Activated CD8-positive, alpha-beta T cell treated with anti-CD3 and anti-CD28 coated beads, Interleukin-2, amount 10 ng/mL, durations not matched to agents 7 days and 5 days (primary cell): ENCODE measurements at regions of chr6 and their contacts with region 1.

Region 1: DNA sequence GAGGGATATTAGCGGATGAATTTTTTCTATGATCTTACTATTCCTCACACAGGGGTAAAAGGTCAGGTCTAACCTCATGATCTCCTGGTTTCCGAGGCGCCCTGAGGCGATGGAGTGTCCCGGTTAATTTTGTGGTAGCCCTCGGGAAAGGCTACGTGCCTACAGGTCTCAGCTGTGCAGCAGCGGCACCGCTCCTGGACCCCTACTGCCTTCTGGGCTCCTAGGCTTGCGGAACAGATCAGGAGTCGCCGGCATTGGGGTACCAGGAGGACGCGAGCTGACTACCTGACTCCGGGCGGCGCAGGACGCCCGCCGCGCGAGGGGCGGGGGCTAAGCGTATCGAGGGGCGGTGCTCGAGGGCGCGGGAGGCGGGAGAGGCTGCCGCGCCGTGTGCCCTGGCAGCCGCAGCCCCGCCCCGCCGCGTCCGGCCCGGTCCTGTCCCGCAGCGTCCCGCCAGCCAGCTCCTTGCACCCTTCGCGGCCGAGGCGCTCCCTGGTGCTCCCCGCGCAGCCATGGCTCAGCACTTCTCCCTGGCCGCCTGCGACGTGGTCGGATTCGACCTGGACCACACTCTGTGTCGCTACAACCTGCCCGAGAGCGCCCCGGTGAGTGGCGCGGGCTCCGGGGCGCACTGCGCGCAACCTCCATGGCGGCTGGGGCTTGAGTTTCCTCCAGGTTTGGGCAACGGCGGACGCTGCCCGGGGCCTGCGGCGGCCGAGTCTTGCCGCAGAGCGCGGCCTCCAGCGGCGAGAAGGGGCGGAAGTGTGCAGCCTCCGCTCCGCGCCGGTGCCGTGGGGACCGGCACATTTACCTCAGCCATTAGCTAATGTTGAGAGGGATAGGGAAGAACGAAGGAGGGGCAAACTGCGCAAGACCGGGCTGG is at the start of gene NT5DC1:
- DNase-seq: peak; percentile 88
- ATAC-seq: peak; percentile 96
- H3K4me3 Mint-ChIP-seq: peak within 1 kb of the TSS; percentile 88
- H3K27ac Mint-ChIP-seq: peak within 1 kb of the TSS; percentile 87
- H3K4me1 Mint-ChIP-seq: peaks cover 29% of the 10 kb centered on the region
- H3K27me3 Mint-ChIP-seq: peaks cover 2% of the 10 kb centered on the region
- total RNA-seq, gene NT5DC1: 29.5 to 32.9 TPM

Region 2: DNA sequence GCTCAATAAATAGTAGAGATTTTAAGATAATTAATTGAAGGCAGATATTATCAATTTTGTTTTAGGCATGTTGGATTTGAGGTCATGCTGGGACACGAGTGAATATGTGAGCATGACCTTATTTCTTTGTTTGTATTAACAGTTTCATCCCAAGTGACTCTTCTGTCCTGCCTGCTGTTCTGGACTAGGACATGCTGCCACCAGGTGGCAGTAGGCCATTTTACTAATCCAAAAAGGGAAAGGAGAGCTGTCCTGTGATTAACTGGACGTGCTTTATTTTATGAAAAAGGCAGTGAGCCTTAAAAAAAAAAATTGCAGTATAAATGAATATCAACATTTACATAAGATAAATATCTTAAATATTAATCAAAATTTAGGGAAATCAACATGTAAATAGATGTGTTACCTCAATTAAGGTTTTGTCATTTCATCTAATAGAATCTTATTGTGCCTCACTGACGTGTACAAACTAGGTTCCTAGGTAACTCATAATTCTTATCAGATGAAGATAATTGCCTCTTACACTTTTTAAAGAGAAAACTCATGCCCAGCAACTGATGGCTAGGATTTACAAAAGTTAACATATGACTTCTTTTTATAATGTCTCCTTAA is 89.8 kb before region 1 on chr6:
- CTCF ChIA-PET with region 1: interaction called, 22 read pairs
- POLR2A ChIA-PET with region 1: interaction called, 3 read pairs
- DNase-seq: peak; percentile 61
- ATAC-seq: peak; percentile 72
- H3K4me3 Mint-ChIP-seq: no peak overlapping the region
- H3K27ac Mint-ChIP-seq: no peak overlapping the region
- H3K4me1 Mint-ChIP-seq: no peaks in the 10 kb centered on the region
- H3K27me3 Mint-ChIP-seq: peaks cover 18% of the 10 kb centered on the region

Region 3: GRCh38 chr6:116040980-116041379 is 59.7 kb before region 1 on chr6:
- CTCF ChIA-PET with region 1: no interaction called
- POLR2A ChIA-PET with region 1: no interaction called
- DNase-seq: no peak
- ATAC-seq: no peak
- H3K4me3 Mint-ChIP-seq: no peak overlapping the region
- H3K27ac Mint-ChIP-seq: no peak overlapping the region
- H3K4me1 Mint-ChIP-seq: no peaks in the 10 kb centered on the region
- H3K27me3 Mint-ChIP-seq: peaks cover 2% of the 10 kb centered on the region

Region 4: DNA sequence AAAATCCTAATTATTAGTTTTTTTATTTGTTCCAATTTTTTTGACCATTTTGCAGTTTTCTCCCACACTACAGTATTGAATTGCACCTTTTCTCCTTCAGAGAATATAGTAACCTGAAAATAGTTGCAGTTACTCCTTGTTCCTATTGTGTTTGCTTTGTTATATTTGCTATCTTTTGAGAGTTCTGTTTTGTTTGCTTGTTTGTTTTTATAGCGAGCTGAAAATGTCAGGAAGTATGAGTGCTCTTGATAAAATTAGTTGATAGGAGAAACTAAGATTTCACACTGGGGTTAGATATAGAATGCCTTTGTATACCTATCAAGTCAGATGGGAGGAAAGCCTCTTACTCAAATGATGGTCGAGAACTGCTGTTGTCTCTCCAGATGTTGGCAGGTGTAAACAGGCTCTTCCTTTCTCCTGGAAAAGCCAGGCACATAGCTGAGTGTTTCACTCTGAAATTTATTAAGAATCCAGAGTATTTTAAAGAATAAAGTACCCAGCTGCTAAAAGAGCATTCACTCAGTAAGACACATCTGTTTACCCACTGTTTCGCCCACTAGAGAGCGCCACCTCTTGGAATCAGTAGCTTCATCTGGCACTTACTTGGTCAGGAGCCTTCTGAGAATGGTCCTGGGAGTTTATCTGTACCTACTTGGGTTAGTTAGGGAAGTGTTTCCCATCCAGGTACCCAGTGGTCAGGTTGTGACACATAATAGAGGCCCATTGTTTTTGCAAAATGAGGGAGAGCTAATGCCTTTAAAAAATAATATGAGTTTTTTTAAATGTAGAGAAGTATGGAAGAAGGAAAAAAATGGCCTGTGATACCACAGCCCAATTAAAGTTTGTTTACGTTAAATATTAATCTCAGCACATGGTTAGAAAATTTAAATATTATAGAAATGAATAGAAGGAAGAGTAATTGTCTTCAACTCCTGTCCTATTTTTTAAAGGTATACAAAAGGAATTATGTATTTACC is 11.2 kb after region 1 on chr6:
- CTCF ChIA-PET with region 1: interaction called, 39 read pairs
- POLR2A ChIA-PET with region 1: no interaction called
- DNase-seq: peak; percentile 54
- ATAC-seq: no peak
- H3K4me3 Mint-ChIP-seq: no peak overlapping the region
- H3K27ac Mint-ChIP-seq: no peak overlapping the region
- H3K4me1 Mint-ChIP-seq: no peaks in the 10 kb centered on the region
- H3K27me3 Mint-ChIP-seq: no peaks in the 10 kb centered on the region